ENCODE measurements at regions of chr4 and their contacts with region 1.

Region 1: DNA sequence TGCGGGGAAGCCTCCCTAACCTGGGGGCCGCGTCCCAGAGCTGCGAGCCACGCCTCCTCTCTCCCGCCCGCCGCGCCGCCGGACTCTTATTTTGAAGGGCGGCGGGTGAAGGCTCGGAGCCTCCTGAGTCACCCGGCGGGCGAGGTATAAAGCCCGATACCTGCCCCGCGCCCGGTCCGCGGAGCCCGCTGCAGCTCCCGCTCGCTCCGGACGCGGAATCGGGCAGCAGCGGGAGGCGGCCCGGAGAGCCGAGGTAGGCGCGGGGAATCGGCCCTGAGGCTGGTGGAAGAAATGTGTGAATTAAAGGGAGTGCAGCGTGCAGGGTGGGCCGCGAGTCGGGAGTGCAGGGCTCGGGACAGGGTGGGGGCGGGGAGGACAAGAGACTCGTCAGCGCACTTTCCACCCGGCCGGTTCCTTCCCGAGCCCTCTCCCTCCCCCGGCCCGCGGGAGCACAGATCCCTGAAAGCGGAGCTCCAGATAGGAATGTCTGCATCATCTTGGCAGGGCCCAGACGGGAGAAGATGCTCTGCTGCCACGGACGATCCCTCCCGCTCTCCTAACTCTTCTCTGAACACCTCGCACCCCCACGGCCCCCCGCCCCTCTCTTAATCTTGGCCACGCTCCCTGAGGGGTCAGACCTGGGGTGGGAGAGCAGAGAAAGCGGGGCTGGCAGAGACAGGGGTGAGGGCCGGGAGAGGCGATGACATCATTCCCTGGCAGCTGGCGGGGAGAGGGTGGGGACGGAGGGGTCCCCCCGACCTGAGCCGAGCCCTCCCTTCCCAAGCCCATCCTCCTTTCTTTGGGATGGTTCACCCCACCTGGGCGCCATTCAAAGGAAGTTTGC is 177.9 kb downstream of the CBR4 start:
- DNase-seq: peak; percentile 88 to 90 (median 89)
- H3K4me3 ChIP-seq: peak overlapping the region; percentile 96
- H3K27ac ChIP-seq: peak overlapping the region; percentile 80 to 99
- H3K4me1 ChIP-seq: peaks cover 5% of the 10 kb centered on the region
- H3K27me3 ChIP-seq: no peaks in the 10 kb centered on the region
- CTCF ChIP-seq: no peak
- EP300 ChIP-seq: no peak
- POLR2A ChIP-seq: peak; percentile 97

Region 2: GRCh38 chr4:168815379-168816345 is 16.5 kb before region 1 on chr4:
- intact Hi-C with region 1: loop called in 2 of 4 experiments (anchors 2 kb)
- DNase-seq: no peak
- H3K4me3 ChIP-seq: no peak overlapping the region
- H3K27ac ChIP-seq: peak overlapping the region; percentile 53 to 75
- H3K4me1 ChIP-seq: peaks cover 10% of the 10 kb centered on the region
- H3K27me3 ChIP-seq: no peaks in the 10 kb centered on the region
- CTCF ChIP-seq: no peak
- EP300 ChIP-seq: no peak
- POLR2A ChIP-seq: no peak

Region 3: DNA sequence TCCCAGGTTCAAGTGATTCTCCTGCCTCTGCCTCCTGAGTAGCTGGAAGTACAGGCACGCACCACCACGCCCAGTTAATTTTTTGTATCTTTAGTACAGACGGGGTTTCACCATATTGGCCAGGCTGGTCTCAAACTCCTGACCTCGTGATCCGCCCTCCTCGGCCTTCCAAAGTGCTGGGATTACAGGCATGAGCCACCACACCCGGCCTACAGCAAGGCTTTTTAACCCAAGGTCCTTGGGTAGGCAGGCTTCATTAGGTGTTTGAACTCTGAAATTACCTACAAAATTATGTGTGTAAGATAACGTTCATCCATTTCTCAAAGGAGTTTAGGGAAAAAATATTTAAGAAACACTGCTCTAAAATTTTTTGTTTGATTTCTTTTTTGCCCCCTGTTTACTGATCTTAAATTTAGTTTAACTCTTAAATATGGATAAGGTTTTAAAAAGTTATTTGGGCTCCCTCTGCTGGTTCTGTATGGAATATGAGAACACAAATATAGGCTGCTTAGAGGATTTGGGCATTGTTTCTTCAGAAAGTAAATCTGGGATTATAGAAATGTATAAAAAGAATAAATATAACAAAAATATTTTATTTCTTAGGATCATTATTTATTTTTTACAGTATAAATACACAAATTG is 85.1 kb after region 1 on chr4:
- intact Hi-C with region 1: loop called in 2 of 4 experiments (anchors 10 kb)
- DNase-seq: no peak
- H3K4me3 ChIP-seq: no peak overlapping the region
- H3K27ac ChIP-seq: no peak overlapping the region
- H3K4me1 ChIP-seq: no peaks in the 10 kb centered on the region
- H3K27me3 ChIP-seq: no peaks in the 10 kb centered on the region
- CTCF ChIP-seq: peak; percentile 38 to 67 (median 58)
- EP300 ChIP-seq: no peak
- POLR2A ChIP-seq: no peak

Region 4: DNA sequence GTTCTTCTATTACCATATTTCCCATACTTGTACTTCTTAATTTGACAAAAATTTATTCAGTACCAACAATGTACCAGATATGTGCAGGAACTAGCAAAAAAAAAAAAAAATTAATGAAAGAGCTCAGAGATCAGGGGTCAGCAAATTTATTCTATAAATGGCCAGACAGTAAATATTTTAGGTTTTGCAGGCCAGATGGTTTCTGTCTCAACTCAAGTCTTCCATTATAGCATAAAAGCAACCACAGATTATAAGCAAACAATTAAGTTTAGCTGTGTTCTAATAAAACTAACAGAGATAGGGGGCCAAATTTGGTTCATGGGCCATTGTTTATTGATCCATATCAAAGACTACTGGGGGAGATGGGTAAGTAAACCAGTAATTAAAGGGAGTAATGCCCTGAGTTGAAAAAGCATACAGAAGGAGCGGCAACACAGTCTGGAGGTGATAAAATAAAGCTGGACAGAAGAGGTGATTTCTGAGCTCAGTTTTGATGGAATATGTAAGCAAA is 761.0 kb after region 1 on chr4:
- intact Hi-C with region 1: no loop called
- DNase-seq: no peak
- H3K4me3 ChIP-seq: no peak overlapping the region
- H3K27ac ChIP-seq: no peak overlapping the region
- H3K4me1 ChIP-seq: no peaks in the 10 kb centered on the region
- H3K27me3 ChIP-seq: no peaks in the 10 kb centered on the region
- CTCF ChIP-seq: no peak
- EP300 ChIP-seq: no peak
- POLR2A ChIP-seq: no peak

Measured in ovary (tissue), 10 donors.